ENCODE measurements at regions of chr19 and their contacts with region 1.

Region 1: GRCh38 chr19:8592231-8593009 is 15.2 kb upstream of the MYO1F start:
- DNase-seq: peak; percentile 91 to 98 (median 95)
- ATAC-seq: peak; percentile 86
- H3K4me3 ChIP-seq: peak overlapping the region; percentile 47 to 50
- H3K4me3 Mint-ChIP-seq: peak overlapping the region; percentile 84
- H3K27ac ChIP-seq: peak overlapping the region in 1 of 2 experiments; percentile 32
- H3K27ac Mint-ChIP-seq: peak overlapping the region; percentile 84
- H3K4me1 ChIP-seq: peaks cover 21% of the 10 kb centered on the region
- H3K4me1 Mint-ChIP-seq: peaks cover 36% of the 10 kb centered on the region
- H3K27me3 ChIP-seq: no peaks in the 10 kb centered on the region
- H3K27me3 Mint-ChIP-seq: no peaks in the 10 kb centered on the region
- CTCF ChIP-seq: no peak

Region 2: DNA sequence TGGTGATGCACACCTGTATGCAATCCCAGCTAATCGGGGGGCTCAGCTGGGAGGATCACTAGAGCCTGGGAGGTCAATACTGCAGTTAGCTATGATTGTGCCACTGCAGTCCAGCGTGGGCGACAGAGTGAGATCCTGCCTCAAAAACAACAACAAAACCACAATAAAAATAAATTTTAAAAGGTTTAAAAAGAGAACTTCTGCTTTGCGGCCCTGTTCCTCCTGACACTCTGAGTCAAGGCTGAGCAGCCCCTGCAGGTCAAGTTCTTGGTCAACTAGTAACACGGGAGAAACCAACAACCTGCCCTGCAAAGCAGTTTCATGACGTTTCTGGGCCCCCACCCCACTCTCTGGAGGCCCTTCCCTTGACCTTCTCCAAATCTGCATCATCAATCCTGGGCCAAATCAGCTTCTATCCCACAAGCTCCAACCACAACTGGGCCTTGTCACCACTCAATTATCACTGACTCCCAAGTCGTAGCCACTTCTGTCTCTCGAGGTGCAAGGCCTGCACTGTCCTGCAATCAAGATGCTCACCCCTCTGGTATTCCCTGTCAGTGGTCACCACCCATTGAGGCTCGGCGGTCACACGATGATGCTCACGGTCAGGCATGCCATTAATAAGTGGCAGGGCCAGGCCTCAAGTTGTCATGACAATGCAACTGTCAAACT is 594.5 kb before region 1 on chr19:
- CTCF ChIA-PET with region 1: no interaction called
- POLR2A ChIA-PET with region 1: no interaction called
- intact Hi-C with region 1: no loop called
- DNase-seq: no peak
- ATAC-seq: no peak
- H3K4me3 ChIP-seq: no peak overlapping the region
- H3K4me3 Mint-ChIP-seq: no peak overlapping the region
- H3K27ac ChIP-seq: no peak overlapping the region
- H3K27ac Mint-ChIP-seq: peak overlapping the region; percentile 57
- H3K4me1 ChIP-seq: peaks cover 25% of the 10 kb centered on the region
- H3K4me1 Mint-ChIP-seq: peaks cover 73% of the 10 kb centered on the region
- H3K27me3 ChIP-seq: no peaks in the 10 kb centered on the region
- H3K27me3 Mint-ChIP-seq: no peaks in the 10 kb centered on the region
- CTCF ChIP-seq: no peak

Region 3: DNA sequence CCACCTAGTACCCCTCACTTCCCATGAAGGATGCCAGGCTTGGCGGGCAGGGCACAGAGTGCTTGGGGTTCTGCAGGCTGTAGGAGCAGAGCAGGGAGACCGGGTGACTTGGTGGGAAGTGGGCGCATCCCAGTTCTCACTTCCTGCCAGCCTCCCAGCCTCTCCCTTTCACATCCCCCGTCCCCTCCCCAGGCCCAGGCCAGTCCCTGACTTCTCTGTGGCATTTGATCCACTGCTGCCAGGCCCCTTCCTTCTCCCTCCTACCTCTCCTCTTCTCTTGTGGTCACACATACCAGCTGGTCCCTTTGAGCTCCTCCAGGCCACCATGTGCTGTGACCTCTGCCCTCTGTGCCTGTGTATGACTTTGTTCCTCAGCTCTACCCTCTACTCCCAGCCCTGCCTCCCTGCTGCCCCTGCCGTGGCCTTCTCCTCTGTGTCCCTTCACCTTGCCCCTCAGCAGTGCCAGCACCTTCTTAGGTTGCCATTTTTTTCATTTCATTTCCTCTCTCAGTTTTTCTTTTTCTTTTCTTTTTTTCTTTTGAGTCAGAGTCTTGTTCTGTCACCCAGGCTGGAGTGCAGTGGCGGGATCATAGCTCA is 34.7 kb before region 1 on chr19:
- CTCF ChIA-PET with region 1: no interaction called
- POLR2A ChIA-PET with region 1: no interaction called
- intact Hi-C with region 1: no loop called
- DNase-seq: no peak
- ATAC-seq: no peak
- H3K4me3 ChIP-seq: no peak overlapping the region
- H3K4me3 Mint-ChIP-seq: no peak overlapping the region
- H3K27ac ChIP-seq: peak overlapping the region in 1 of 2 experiments; percentile 27
- H3K27ac Mint-ChIP-seq: peak overlapping the region; percentile 82
- H3K4me1 ChIP-seq: peaks cover 14% of the 10 kb centered on the region
- H3K4me1 Mint-ChIP-seq: peaks cover 32% of the 10 kb centered on the region
- H3K27me3 ChIP-seq: no peaks in the 10 kb centered on the region
- H3K27me3 Mint-ChIP-seq: no peaks in the 10 kb centered on the region
- CTCF ChIP-seq: no peak

Region 4: GRCh38 chr19:8609279-8610040 is 17.0 kb after region 1 on chr19:
- CTCF ChIA-PET with region 1: interaction called, 4 read pairs
- POLR2A ChIA-PET with region 1: interaction called, 3 read pairs
- intact Hi-C with region 1: loop called (anchors 1 to 2 kb)
- DNase-seq: peak in 6 of 9 experiments; percentile 24 to 61 (median 40)
- ATAC-seq: peak; percentile 13
- H3K4me3 ChIP-seq: peak overlapping the region; percentile 84 to 97
- H3K4me3 Mint-ChIP-seq: peak overlapping the region; percentile 92
- H3K27ac ChIP-seq: peak overlapping the region; percentile 4 to 66
- H3K27ac Mint-ChIP-seq: peak overlapping the region; percentile 86
- H3K4me1 ChIP-seq: peaks cover 33% of the 10 kb centered on the region
- H3K4me1 Mint-ChIP-seq: peaks cover 43% of the 10 kb centered on the region
- H3K27me3 ChIP-seq: no peaks in the 10 kb centered on the region
- H3K27me3 Mint-ChIP-seq: no peaks in the 10 kb centered on the region
- CTCF ChIP-seq: no peak

Region 5: DNA sequence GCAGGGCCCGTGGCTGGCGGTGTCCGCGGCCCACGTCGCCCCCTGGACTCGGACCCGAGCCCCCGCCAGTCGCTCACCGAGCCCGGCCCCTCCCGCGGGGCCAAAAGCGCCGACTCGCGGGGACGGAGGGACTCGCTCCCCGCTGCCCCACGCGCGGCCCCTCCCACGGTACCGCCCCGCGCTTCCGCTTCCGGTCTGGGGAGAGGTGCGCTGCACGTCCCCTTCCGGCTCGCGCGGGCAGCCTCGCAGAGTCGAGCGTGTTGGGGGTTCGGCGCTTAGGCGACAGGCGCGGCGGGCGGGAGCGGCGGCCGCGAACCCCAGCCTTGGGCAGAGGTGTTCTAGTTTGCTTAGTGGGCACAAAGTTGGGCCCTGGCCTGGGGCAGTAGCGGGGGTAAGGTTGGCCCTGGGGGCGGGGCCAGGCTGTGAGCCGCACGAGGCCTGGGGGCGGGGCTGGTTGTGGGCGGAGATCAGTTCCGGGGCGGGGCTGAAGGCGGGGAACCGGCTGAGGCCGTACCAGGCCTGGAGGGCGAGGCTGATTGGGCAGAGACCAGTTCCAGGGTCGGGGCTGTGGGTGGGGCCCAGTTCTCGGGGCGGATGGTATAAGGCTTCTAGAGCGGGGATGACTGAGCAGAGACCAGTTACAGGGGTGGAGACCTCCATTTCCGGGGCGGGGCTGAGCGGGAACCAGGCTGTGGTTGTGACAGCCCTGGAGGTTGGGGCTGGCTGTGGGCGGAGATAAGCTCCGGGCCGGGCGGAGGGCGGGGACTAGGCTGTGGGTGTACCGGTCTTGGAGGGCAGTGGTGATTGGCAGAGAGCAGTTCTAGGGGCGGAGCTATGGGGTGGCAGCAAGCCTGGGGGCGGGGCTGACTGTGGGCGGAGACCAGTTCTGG is 240.0 kb after region 1 on chr19 and contains the starts of genes MBD3L1 and ZNF558:
- CTCF ChIA-PET with region 1: no interaction called
- POLR2A ChIA-PET with region 1: no interaction called
- intact Hi-C with region 1: loop called in 1 of 2 experiments (anchors 2 kb)
- DNase-seq: peak; percentile 97 to 100 (median 99)
- ATAC-seq: peak; percentile 89
- H3K4me3 ChIP-seq: peak within 1 kb of the TSS; percentile 86 to 93
- H3K4me3 Mint-ChIP-seq: peak within 1 kb of the TSS; percentile 92
- H3K27ac ChIP-seq: peak within 1 kb of the TSS; percentile 91
- H3K27ac Mint-ChIP-seq: peak within 1 kb of the TSS; percentile 96
- H3K4me1 ChIP-seq: peaks cover 13% of the 10 kb centered on the region
- H3K4me1 Mint-ChIP-seq: peaks cover 27% of the 10 kb centered on the region
- H3K27me3 ChIP-seq: no peaks in the 10 kb centered on the region
- H3K27me3 Mint-ChIP-seq: no peaks in the 10 kb centered on the region
- CTCF ChIP-seq: no peak
- total RNA-seq, gene MBD3L1: not detected
- total RNA-seq, gene ZNF558: 28.1 to 32.9 TPM

Measured in CD8-positive, alpha-beta T cell (primary cell).